WTC11 (cell line): ENCODE measurements at regions of chr22 and their contacts with region 1.

Region 1: DNA sequence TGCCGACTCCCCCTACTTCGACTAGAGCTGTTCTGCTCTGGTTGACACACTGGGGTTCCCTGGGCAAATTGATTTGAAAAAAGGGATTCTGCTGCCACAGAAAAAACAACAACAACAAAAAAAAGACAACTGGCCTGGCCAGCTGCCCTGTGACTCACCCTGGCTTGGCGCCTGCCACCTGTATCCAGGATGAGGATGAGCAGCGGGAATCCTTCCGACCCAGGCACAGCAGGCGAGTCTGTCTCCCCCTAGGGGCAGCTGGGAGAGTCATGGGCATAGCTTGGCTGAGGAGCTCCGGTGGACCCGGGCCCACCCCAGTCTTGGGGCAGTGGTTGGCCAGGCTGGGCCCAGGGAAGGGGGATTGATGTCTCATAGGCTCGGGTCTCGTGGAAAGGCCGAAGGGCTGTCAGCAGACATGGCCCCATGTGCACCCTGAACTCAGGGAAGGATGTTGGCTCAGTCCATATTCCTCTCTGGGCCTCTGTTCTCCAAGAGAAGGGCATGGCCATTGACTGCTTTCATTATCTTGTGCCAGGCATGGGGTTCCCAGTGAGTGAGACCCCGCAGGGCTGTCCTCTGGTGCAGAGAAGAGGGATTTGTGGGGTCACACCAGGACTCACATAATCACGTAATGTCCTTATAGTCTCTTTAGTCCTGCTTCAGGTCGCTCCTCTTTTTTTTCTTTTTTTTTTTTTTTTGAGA is 10.4 kb upstream of the SUN2 start:
- DNase-seq: peak; percentile 84
- ATAC-seq: peak; percentile 90
- H3K4me3 Mint-ChIP-seq: no peak overlapping the region
- H3K27ac Mint-ChIP-seq: no peak overlapping the region
- H3K4me1 Mint-ChIP-seq: 0 out of 2 replicates have a peak, but pooled peaks cover 1% of the 10 kb centered on the region
- H3K27me3 Mint-ChIP-seq: no peaks in the 10 kb centered on the region
- CTCF ChIP-seq: peak; percentile 66

Region 2: DNA sequence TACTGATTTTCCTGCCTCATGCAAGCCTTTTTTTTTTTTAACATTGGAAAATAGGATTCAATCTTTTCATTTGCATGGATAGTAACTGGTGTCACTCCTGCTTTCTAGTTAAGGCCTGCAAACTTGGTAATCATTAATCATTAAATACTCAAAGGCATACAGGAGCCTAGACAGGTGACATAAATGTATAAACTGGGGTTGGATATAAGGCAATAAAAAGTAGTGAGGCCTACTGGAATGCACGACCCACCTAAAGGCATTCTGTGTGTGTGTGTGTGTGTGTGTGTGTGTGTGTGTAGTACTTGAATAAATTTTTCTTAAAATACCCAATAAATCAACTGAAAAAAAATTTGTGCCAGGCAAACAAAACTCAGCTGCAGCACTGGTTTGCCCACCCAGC is 76.6 kb before region 1 on chr22:
- CTCF ChIA-PET with region 1: no interaction called
- POLR2A ChIA-PET with region 1: no interaction called
- DNase-seq: no peak
- ATAC-seq: no peak
- H3K4me3 Mint-ChIP-seq: no peak overlapping the region
- H3K27ac Mint-ChIP-seq: no peak overlapping the region
- H3K4me1 Mint-ChIP-seq: no peaks in the 10 kb centered on the region
- H3K27me3 Mint-ChIP-seq: no peaks in the 10 kb centered on the region
- CTCF ChIP-seq: no peak

Region 3: DNA sequence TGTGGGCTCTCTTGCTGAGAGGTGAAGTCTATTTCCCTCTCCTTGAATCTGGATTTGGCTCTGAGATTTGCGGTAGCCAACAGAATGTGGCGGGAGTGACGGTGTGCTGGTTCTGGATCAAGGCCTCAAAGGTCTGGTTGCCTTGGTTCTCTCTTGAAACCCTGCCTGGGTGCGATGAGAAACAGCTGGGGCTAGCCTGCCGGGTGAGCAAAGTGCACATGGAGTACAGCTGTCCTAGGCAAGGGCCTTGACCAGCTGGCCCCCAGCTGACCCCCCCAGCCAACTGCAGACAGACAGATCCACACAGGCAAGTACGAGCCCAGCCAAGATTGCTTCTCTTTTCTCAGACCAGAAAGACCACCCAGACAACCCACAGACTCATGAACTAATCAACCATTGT is 21.2 kb before region 1 on chr22:
- CTCF ChIA-PET with region 1: interaction called, 20 read pairs
- POLR2A ChIA-PET with region 1: no interaction called
- DNase-seq: no peak
- ATAC-seq: no peak
- H3K4me3 Mint-ChIP-seq: no peak overlapping the region
- H3K27ac Mint-ChIP-seq: peak overlapping the region; percentile 53; the same call in 1 of the 2 replicates
- H3K4me1 Mint-ChIP-seq: no peaks in the 10 kb centered on the region
- H3K27me3 Mint-ChIP-seq: no peaks in the 10 kb centered on the region
- CTCF ChIP-seq: no peak

Region 4: GRCh38 chr22:38802671-38803121 is 36.5 kb after region 1 on chr22:
- CTCF ChIA-PET with region 1: interaction called, 21 read pairs
- POLR2A ChIA-PET with region 1: interaction called, 4 read pairs
- DNase-seq: no peak
- ATAC-seq: peak; percentile 60
- H3K4me3 Mint-ChIP-seq: peak overlapping the region; percentile 86
- H3K27ac Mint-ChIP-seq: no peak overlapping the region
- H3K4me1 Mint-ChIP-seq: peaks cover 13% of the 10 kb centered on the region
- H3K27me3 Mint-ChIP-seq: peaks cover 48% of the 10 kb centered on the region
- CTCF ChIP-seq: no peak

Region 5: DNA sequence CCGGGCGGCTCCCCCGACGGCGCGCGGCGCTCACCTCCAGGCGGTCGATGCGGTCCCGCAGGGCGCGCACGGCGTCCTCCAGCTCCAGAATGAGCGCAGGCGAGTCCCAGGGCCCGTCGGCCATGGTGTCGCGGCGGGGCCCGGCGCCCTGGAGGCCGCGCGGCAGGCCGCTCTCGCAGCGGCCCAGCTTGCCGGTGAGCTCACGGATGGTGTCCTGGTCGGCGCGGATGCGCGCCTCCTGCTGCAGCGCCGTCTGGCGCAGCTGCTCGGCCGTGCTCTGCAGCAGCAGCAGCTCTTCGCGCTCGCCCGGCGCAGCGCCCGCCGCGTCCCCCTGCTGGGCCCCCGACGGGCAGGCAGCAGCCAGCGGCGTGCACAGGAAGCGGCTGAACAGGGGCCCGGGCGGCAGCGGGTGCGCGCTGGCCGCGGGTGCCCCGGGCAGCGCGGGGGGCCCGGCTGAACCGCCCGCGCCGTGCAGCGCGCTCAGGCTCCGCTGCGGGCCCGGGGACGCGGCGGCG is 77.0 kb after region 1 on chr22:
- CTCF ChIA-PET with region 1: interaction called, 51 read pairs
- POLR2A ChIA-PET with region 1: interaction called, 3 read pairs
- DNase-seq: peak; percentile 60
- ATAC-seq: peak; percentile 63
- H3K4me3 Mint-ChIP-seq: no peak overlapping the region
- H3K27ac Mint-ChIP-seq: no peak overlapping the region
- H3K4me1 Mint-ChIP-seq: peaks cover 21% of the 10 kb centered on the region
- H3K27me3 Mint-ChIP-seq: peaks cover 69% of the 10 kb centered on the region
- CTCF ChIP-seq: no peak

Region 6: GRCh38 chr22:38872172-38872830 is 106.1 kb after region 1 on chr22 and contains the start of gene CBX6:
- CTCF ChIA-PET with region 1: interaction called, 67 read pairs
- POLR2A ChIA-PET with region 1: no interaction called
- DNase-seq: peak; percentile 96
- ATAC-seq: peak; percentile 49
- H3K4me3 Mint-ChIP-seq: peak within 1 kb of the TSS; percentile 93
- H3K27ac Mint-ChIP-seq: peak within 1 kb of the TSS; percentile 96
- H3K4me1 Mint-ChIP-seq: peaks cover 46% of the 10 kb centered on the region
- H3K27me3 Mint-ChIP-seq: peaks cover 7% of the 10 kb centered on the region
- CTCF ChIP-seq: no peak
- total RNA-seq, gene CBX6: 21.5 to 27.0 TPM (median 23.8 TPM) in 3 replicates

Region 7: GRCh38 chr22:38886333-38886732 is 120.1 kb after region 1 on chr22:
- CTCF ChIA-PET with region 1: no interaction called
- POLR2A ChIA-PET with region 1: no interaction called
- DNase-seq: no peak
- ATAC-seq: no peak
- H3K4me3 Mint-ChIP-seq: no peak overlapping the region
- H3K27ac Mint-ChIP-seq: no peak overlapping the region
- H3K4me1 Mint-ChIP-seq: no peaks in the 10 kb centered on the region; the same call in 1 of the 2 replicates
- H3K27me3 Mint-ChIP-seq: 0 out of 2 replicates have a peak, but pooled peaks cover 3% of the 10 kb centered on the region
- CTCF ChIP-seq: no peak

Region 8: GRCh38 chr22:39003165-39003638 is 237.0 kb after region 1 on chr22:
- CTCF ChIA-PET with region 1: interaction called, 17 read pairs
- POLR2A ChIA-PET with region 1: interaction called, 3 read pairs
- DNase-seq: peak; percentile 79
- ATAC-seq: peak; percentile 99
- H3K4me3 Mint-ChIP-seq: no peak overlapping the region
- H3K27ac Mint-ChIP-seq: peak overlapping the region; percentile 71
- H3K4me1 Mint-ChIP-seq: peaks cover 10% of the 10 kb centered on the region
- H3K27me3 Mint-ChIP-seq: no peaks in the 10 kb centered on the region; the same call in 1 of the 2 replicates
- CTCF ChIP-seq: peak; percentile 73

Region 9: GRCh38 chr22:39224581-39225365 is 458.5 kb after region 1 on chr22:
- CTCF ChIA-PET with region 1: no interaction called
- POLR2A ChIA-PET with region 1: no interaction called
- DNase-seq: no peak
- ATAC-seq: no peak
- H3K4me3 Mint-ChIP-seq: no peak overlapping the region
- H3K27ac Mint-ChIP-seq: no peak overlapping the region; the same call in 1 of the 2 replicates
- H3K4me1 Mint-ChIP-seq: peaks cover 17% of the 10 kb centered on the region
- H3K27me3 Mint-ChIP-seq: peaks cover 4% of the 10 kb centered on the region
- CTCF ChIP-seq: no peak